Heart right ventricle (tissue), 16 donors: ENCODE measurements at regions of chr17 and their contacts with region 1.

Region 1: DNA sequence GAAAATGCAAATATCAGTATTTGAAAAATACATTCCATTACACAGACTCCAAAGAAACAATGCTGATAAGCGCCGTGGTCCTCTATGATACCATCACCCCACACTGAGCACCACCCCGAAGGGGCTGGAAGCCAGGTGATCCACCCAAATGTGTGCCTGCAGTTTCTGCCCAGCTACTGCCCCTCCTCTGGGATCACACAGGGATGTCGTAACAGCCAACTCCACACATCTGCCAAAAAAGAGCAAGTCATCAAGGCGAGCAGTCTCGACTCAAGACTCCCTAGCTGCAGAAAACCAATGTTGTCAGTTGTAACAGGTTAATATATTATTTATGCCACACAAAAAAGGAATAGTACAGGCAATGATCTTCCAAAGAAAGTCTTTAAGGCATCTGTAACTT is 20.9 kb downstream of the CYB5D2 start:
- DNase-seq: no peak
- ATAC-seq: peak in 3 of 8 donors; percentile 3 to 40 (median 33)
- H3K4me3 ChIP-seq: no peak overlapping the region
- H3K27ac ChIP-seq: peak overlapping the region in 1 of 10 donors; percentile 44
- H3K4me1 ChIP-seq: peaks cover 0 to 52% (median 28%) of the 10 kb centered on the region in 9 donors
- H3K27me3 ChIP-seq: no peaks in the 10 kb centered on the region
- CTCF ChIP-seq: no peak

Region 2: DNA sequence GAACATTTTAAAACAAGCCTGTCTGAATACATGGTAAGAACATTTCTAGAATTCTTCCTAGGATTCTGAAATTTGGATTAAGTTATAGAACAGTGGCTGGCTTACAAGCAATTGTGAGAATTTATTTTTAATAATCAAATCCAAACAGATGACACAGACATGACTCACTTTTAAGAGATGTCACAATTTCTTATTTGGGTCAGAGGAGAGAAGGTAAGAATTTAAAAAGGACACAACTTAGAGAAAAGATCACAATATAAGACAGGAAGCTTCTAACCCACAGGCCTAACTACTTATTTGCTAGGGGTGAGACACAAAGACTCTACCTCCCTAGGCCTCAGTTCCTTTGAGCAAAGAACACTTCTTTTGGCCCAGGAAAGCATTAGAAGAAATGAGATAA is 53.8 kb before region 1 on chr17:
- intact Hi-C with region 1: no loop called
- DNase-seq: no peak
- ATAC-seq: no peak
- H3K4me3 ChIP-seq: no peak overlapping the region
- H3K27ac ChIP-seq: peak overlapping the region in 1 of 10 donors; percentile 5
- H3K4me1 ChIP-seq: peaks cover 0 to 19% (median 0%) of the 10 kb centered on the region in 9 donors
- H3K27me3 ChIP-seq: no peaks in the 10 kb centered on the region
- CTCF ChIP-seq: no peak

Region 3: GRCh38 chr17:4127555-4127954 is 36.4 kb before region 1 on chr17:
- intact Hi-C with region 1: no loop called
- DNase-seq: no peak
- ATAC-seq: no peak
- H3K4me3 ChIP-seq: no peak overlapping the region
- H3K27ac ChIP-seq: peak overlapping the region in 1 of 10 donors; percentile 53
- H3K4me1 ChIP-seq: peaks cover 0 to 51% (median 15%) of the 10 kb centered on the region in 9 donors
- H3K27me3 ChIP-seq: no peaks in the 10 kb centered on the region
- CTCF ChIP-seq: no peak

Region 4: GRCh38 chr17:4199818-4200402 is 36.0 kb after region 1 on chr17:
- intact Hi-C with region 1: loop called in 1 of 10 experiments (anchors 2 kb)
- DNase-seq: no peak
- ATAC-seq: peak in 1 of 8 donors; percentile 48
- H3K4me3 ChIP-seq: no peak overlapping the region
- H3K27ac ChIP-seq: no peak overlapping the region
- H3K4me1 ChIP-seq: peaks cover 0 to 11% (median 10%) of the 10 kb centered on the region in 9 donors
- H3K27me3 ChIP-seq: no peaks in the 10 kb centered on the region
- CTCF ChIP-seq: peak; percentile 21 to 77 (median 73)

Region 5: DNA sequence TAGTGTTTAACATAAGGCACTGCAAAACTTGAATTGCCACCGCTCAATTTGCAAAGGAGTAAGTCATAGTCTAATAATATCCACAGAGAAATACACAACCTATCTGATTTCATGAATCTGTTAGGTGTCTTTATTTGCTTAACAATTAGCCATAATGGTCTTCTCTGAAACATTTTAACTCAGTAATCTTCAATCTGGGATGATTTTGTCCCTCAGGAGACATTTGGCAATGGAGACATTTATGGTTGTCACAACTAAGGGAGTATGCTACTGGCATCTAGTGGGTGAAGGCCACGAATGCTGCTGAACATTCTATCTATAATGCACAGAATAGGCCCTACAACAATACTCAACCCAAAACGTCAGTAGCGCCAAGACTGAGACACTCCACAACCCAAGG is 198.2 kb after region 1 on chr17:
- intact Hi-C with region 1: no loop called
- DNase-seq: no peak
- ATAC-seq: no peak
- H3K4me3 ChIP-seq: no peak overlapping the region
- H3K27ac ChIP-seq: peak overlapping the region in 7 of 10 donors; percentile 22 to 70 (median 38)
- H3K4me1 ChIP-seq: peaks cover 2 to 74% (median 50%) of the 10 kb centered on the region in 9 donors
- H3K27me3 ChIP-seq: no peaks in the 10 kb centered on the region
- CTCF ChIP-seq: peak in 4 of 9 donors; percentile 6 to 48 (median 37)